ENCODE measurements at regions of chr16 and their contacts with region 1.

Region 1: GRCh38 chr16:11651796-11652195 is 16.5 kb upstream of the SNN start:
- DNase-seq: no peak
- ATAC-seq: no peak
- H3K4me3 ChIP-seq: no peak overlapping the region
- H3K27ac ChIP-seq: no peak overlapping the region
- H3K4me1 ChIP-seq: no peaks in the 10 kb centered on the region
- H3K27me3 ChIP-seq: no peaks in the 10 kb centered on the region
- CTCF ChIP-seq: no peak

Region 2: DNA sequence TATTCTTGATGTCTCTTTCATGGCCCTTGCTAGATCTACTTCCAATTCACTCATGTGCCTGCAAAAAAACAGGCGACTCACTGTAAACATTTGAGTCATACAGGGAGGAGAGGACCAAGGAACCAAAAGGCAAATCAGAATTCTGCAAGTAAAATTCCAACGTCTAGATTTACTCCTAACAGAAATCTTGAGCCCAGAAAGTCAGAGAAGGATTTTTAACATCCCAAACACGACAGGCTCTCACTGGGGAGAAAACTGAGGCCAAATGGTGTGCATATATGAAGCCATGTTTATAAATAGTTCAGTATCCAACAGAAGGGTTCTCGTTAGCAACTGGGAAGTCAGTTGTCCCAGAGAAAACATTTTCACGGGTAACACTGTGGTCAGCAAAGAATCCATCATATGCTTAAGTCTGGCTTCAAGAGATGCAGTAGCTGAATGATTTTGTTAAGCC is 105.2 kb before region 1 on chr16:
- CTCF ChIA-PET with region 1: interaction called, 12 read pairs
- POLR2A ChIA-PET with region 1: no interaction called
- in situ Hi-C with region 1: no loop called
- intact Hi-C with region 1: no loop called
- DNase-seq: no peak
- ATAC-seq: no peak
- H3K4me3 ChIP-seq: no peak overlapping the region
- H3K27ac ChIP-seq: no peak overlapping the region
- H3K4me1 ChIP-seq: no peaks in the 10 kb centered on the region
- H3K27me3 ChIP-seq: no peaks in the 10 kb centered on the region
- CTCF ChIP-seq: no peak